Mammary epithelial cell (primary cell): ENCODE measurements at regions of chr5 and their contacts with region 1.

Region 1: GRCh38 chr5:78997090-78997489 is 12.0 kb upstream of the ARSB start:
- DNase-seq: no peak
- H3K4me3 ChIP-seq: no peak overlapping the region
- H3K27ac ChIP-seq: no peak overlapping the region
- H3K4me1 ChIP-seq: no peaks in the 10 kb centered on the region
- H3K27me3 ChIP-seq: peaks cover 1% of the 10 kb centered on the region
- CTCF ChIP-seq: no peak

Region 2: DNA sequence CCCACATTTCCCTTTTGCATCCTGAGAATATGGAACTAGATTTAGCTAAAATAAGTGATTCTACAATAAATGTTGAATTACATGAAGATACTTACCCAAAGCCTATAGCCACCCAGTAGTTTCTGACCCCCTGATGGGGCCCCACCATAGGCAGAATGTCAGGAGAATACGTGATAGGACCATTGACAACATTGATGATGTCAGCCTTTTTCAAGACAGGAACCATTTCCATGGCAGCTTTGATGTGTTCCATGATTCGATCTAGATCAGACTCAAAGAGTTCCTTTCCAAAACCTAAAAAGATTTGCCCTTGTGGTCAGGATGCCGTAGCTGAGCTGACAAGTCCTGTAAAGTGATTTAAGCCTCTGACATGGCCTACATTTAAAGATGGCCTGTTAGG is 45.1 kb after region 1 on chr5:
- CTCF ChIA-PET with region 1: no interaction called
- dilution Hi-C with region 1: no loop called
- in situ Hi-C with region 1: no loop called
- intact Hi-C with region 1: loop called (anchors 5 kb)
- DNase-seq: no peak
- H3K4me3 ChIP-seq: no peak overlapping the region
- H3K27ac ChIP-seq: no peak overlapping the region
- H3K4me1 ChIP-seq: no peaks in the 10 kb centered on the region
- H3K27me3 ChIP-seq: no peaks in the 10 kb centered on the region
- CTCF ChIP-seq: no peak

Region 3: DNA sequence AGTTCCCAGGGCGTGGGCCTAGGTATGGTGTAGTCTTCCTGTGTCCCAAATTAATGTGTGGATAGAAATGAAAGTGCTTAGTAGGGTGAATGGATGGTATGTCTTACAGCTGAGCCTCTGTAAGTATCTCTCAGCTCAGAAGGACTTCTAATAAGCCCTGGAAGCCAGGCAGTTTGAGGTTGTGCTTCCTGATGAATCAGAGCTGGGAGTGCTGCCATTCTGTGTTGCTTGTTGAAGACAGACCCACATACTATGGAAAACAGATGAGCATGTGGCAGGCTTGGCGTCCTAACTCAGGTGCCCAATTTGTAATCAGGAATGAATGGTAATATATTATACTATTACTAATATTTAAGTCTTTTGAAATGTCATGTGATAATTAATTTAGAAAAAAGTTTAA is 762.3 kb after region 1 on chr5:
- CTCF ChIA-PET with region 1: no interaction called
- dilution Hi-C with region 1: no loop called
- in situ Hi-C with region 1: no loop called
- intact Hi-C with region 1: no loop called
- DNase-seq: peak; percentile 47
- H3K4me3 ChIP-seq: no peak overlapping the region
- H3K27ac ChIP-seq: no peak overlapping the region
- H3K4me1 ChIP-seq: no peaks in the 10 kb centered on the region
- H3K27me3 ChIP-seq: peaks cover 2% of the 10 kb centered on the region
- CTCF ChIP-seq: no peak